Mammary epithelial cell (primary cell): ENCODE measurements at regions of chr20 and their contacts with region 1.

Region 1: GRCh38 chr20:14337400-14338171 is at the start of gene FLRT3:
- DNase-seq: peak; percentile 98
- H3K4me3 ChIP-seq: peak within 1 kb of the TSS; percentile 81 to 100 (median 97)
- H3K27ac ChIP-seq: peak within 1 kb of the TSS; percentile 98
- H3K4me1 ChIP-seq: no peaks in the 10 kb centered on the region
- H3K27me3 ChIP-seq: no peaks in the 10 kb centered on the region
- CTCF ChIP-seq: peak; percentile 83 to 94
- total RNA-seq, gene FLRT3: 83.4 to 194 TPM

Region 2: DNA sequence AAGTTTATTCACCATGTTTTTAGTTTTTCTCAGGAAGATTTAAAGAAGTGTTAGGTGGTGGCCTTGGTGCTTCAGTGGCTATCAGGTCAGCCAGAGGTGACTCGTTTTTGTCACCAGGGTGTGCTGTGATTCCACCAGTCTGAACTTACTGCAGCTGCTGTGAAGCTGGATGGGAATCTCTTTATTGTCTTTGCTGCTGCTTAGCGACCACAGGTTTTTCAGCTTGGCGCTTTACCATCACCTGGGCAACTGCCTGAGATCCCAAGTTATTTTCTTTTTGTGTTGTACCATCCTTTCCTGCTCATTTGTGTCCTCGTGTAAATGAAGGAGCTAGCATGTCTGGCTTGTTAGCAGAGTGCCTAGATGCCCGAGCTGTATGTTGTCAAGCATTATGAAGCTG is 195.4 kb before region 1 on chr20:
- CTCF ChIA-PET with region 1: no interaction called
- dilution Hi-C with region 1: no loop called
- in situ Hi-C with region 1: loop called in 1 of 2 experiments (anchors 10 kb)
- intact Hi-C with region 1: loop called (anchors 1 kb)
- DNase-seq: peak; percentile 66
- H3K4me3 ChIP-seq: no peak overlapping the region
- H3K27ac ChIP-seq: no peak overlapping the region
- H3K4me1 ChIP-seq: peaks cover 6% of the 10 kb centered on the region
- H3K27me3 ChIP-seq: no peaks in the 10 kb centered on the region
- CTCF ChIP-seq: peak; percentile 70 to 78

Region 3: DNA sequence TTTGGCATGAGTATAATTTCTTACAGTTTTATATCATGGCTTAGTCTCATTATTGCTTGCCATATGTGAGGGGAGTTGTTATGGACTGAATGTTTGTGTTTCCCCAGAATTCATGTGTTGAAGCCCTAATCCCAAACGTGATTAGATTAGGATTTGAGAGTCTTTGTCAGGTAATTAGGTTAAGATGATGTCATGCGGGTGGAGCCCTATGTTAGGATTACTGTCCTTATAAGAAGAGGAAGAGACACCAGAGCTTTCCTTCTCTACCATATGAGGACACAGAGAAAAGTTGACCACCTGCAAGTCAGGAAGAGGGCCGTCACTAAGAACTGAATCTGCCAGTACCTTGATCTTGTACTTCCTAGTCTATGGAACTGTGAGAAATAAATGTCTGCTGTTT is 56.1 kb after region 1 on chr20:
- CTCF ChIA-PET with region 1: no interaction called
- dilution Hi-C with region 1: no loop called
- in situ Hi-C with region 1: no loop called
- intact Hi-C with region 1: no loop called
- DNase-seq: no peak
- H3K4me3 ChIP-seq: no peak overlapping the region
- H3K27ac ChIP-seq: no peak overlapping the region
- H3K4me1 ChIP-seq: peaks cover under 1% of the 10 kb centered on the region
- H3K27me3 ChIP-seq: no peaks in the 10 kb centered on the region
- CTCF ChIP-seq: no peak

Region 4: GRCh38 chr20:14434379-14435136 is 97.0 kb after region 1 on chr20:
- CTCF ChIA-PET with region 1: no interaction called
- dilution Hi-C with region 1: no loop called
- in situ Hi-C with region 1: no loop called
- intact Hi-C with region 1: loop called (anchors 1 kb)
- DNase-seq: peak; percentile 96
- H3K4me3 ChIP-seq: no peak overlapping the region
- H3K27ac ChIP-seq: peak overlapping the region; percentile 67
- H3K4me1 ChIP-seq: peaks cover 17% of the 10 kb centered on the region
- H3K27me3 ChIP-seq: no peaks in the 10 kb centered on the region
- CTCF ChIP-seq: no peak

Region 5: DNA sequence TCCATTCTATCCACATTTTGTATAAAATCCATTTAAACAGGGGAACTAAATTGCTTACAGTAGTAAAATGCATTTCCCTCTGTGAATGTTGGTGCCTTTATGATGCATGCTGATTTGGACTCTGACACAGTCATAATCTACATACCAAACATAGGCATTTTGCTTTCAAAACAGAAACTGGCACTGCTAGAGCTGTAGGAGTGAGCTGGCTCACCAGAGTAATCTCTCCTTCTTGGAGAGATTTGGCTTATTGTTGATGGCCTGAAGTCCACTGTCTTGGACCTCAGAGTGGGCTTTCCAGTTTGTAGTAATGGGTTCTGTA is 363.0 kb after region 1 on chr20:
- CTCF ChIA-PET with region 1: no interaction called
- dilution Hi-C with region 1: no loop called
- in situ Hi-C with region 1: loop called in 1 of 2 experiments (anchors 25 kb)
- intact Hi-C with region 1: loop called (anchors 1 kb)
- DNase-seq: peak; percentile 80
- H3K4me3 ChIP-seq: no peak overlapping the region
- H3K27ac ChIP-seq: peak overlapping the region; percentile 57
- H3K4me1 ChIP-seq: peaks cover 9% of the 10 kb centered on the region
- H3K27me3 ChIP-seq: no peaks in the 10 kb centered on the region
- CTCF ChIP-seq: no peak

Region 6: DNA sequence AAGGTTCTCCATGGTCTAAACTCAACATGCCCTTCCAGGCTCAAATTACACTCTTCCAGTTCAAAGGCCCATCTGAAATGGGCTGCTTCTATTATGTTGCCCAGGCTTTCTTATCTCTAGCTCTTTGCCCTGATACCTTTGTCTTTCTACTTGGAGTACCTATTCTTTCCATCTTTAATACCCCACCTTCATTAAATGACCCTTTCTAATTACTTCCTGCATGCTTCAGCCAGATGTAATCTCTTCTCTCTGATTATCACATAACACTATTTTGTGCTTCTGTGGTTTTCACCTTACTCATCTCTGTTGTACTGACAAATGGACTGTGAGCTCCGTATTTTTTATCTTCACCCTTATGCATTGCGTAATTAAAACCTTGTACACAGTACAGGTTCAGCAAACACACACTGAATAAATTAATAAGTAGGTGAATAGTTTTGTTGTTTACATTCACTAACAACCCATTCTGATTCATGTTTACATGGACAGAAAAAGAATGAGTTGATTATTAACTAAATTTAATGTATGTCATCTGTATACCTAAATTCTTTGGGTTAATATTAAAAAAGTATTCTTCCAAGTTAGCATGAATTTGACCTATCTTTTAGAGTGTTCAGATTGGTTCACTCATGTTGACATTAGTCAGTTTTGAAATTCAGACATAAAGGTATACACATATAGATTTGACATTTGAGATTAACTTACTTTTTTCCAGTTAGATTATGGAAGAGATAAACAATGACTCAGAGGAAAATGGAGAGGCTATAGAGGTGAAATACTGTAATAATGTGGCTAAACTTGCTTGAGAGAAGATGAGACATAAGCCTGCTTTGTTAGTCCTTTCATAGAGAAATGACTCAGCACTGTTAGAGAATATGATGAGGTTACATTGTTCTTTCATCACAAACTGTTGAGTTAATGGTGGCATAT is 541.4 kb after region 1 on chr20:
- CTCF ChIA-PET with region 1: no interaction called
- dilution Hi-C with region 1: no loop called
- in situ Hi-C with region 1: loop called in 1 of 2 experiments (anchors 25 kb)
- intact Hi-C with region 1: loop called (anchors 5 kb)
- DNase-seq: peak; percentile 95
- H3K4me3 ChIP-seq: no peak overlapping the region
- H3K27ac ChIP-seq: peak overlapping the region; percentile 85
- H3K4me1 ChIP-seq: peaks cover 47% of the 10 kb centered on the region
- H3K27me3 ChIP-seq: no peaks in the 10 kb centered on the region
- CTCF ChIP-seq: no peak

Region 7: GRCh38 chr20:15045246-15045645 is 707.7 kb after region 1 on chr20:
- CTCF ChIA-PET with region 1: no interaction called
- dilution Hi-C with region 1: no loop called
- in situ Hi-C with region 1: no loop called
- intact Hi-C with region 1: loop called (anchors 10 kb)
- DNase-seq: peak; percentile 65
- H3K4me3 ChIP-seq: no peak overlapping the region
- H3K27ac ChIP-seq: peak overlapping the region; percentile 59
- H3K4me1 ChIP-seq: peaks cover 13% of the 10 kb centered on the region
- H3K27me3 ChIP-seq: no peaks in the 10 kb centered on the region
- CTCF ChIP-seq: no peak

Region 8: DNA sequence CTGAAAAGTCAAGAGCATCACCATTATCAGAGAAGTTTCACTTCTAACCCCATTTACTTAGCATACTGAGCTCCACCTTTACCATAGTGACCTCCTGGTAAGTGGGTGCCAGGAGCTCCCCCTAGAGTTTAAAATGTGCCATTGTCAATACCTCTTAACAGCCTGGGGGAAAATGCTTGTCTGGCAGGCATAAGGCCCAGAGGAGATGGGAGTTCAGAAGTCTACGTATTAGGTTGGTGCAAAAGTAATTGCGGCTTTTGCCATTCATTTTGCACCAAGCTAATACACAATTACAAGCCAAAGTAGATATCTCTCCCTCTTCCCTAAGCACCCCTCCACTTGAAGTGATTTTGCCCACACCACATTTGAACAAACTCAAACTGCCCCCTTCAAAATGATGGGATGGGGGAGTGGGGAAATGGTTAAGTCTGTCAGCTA is 1316.6 kb after region 1 on chr20:
- CTCF ChIA-PET with region 1: no interaction called
- dilution Hi-C with region 1: no loop called
- in situ Hi-C with region 1: loop called in 1 of 2 experiments (anchors 25 kb)
- intact Hi-C with region 1: loop called (anchors 10 kb)
- DNase-seq: peak; percentile 55
- H3K4me3 ChIP-seq: no peak overlapping the region
- H3K27ac ChIP-seq: no peak overlapping the region
- H3K4me1 ChIP-seq: no peaks in the 10 kb centered on the region
- H3K27me3 ChIP-seq: no peaks in the 10 kb centered on the region
- CTCF ChIP-seq: peak; percentile 67 to 75